ENCODE measurements at regions of chr6 and their contacts with region 1.

Region 1: GRCh38 chr6:110179401-110180227 is at the start of gene WASF1:
- DNase-seq: peak; percentile 95
- ATAC-seq: peak; percentile 78
- H3K4me3 ChIP-seq: peak within 1 kb of the TSS; percentile 66 to 100 (median 90)
- H3K4me3 Mint-ChIP-seq: no peak within 1 kb of the TSS
- H3K27ac ChIP-seq: peak within 1 kb of the TSS; percentile 72 to 88
- H3K27ac Mint-ChIP-seq: peak within 1 kb of the TSS; percentile 94
- H3K4me1 ChIP-seq: peaks cover 27 to 36% of the 10 kb centered on the region in 2 donors
- H3K4me1 Mint-ChIP-seq: peaks cover 8% of the 10 kb centered on the region
- H3K27me3 ChIP-seq: no peaks in the 10 kb centered on the region
- H3K27me3 Mint-ChIP-seq: no peaks in the 10 kb centered on the region
- CTCF ChIP-seq: no peak
- total RNA-seq, gene WASF1: 8.4 and 10.8 TPM in 2 replicates

Region 2: DNA sequence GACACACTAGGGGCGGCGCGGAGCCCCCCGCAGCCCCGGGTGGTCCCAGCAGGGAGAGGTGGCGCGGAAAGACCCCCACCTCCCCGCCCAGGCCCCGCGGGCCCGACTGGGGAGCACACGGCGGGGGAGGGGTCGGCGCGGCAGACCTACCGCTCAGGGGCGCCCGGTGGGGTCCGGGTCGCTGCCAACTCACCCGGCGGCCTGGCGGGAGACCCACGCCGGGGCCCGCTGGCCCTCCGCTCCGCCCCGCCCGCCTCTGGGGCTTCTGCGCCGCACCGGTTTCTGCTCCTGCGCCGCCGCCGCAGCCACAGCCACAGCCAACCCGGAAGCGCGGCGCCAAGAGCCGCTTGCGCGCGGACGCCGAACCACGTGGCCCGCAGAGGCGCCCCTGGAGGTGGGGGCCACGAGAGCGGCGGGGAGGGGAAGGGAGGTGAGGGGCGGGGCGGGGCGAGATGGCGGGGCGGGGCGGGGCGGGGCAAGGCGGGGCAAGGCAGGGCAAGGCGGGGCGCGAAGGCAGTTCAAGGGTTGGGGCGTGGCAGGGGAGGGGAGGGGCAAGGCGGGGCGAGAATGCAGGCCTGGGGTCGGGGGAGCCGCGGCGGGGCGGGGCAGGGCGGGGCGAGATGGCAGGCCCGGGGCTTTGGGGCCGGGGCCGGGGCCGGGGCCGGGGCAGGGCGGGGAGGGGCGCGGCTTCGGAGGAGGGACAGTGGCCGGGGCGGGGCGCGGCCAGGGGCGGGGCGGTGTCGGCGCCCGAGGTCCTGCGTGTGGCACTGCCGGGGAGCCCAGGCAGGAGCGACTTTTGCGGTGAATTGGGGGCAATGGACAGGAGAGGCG is 696.5 kb before region 1 on chr6 and contains the start of gene ZBTB24:
- CTCF ChIA-PET with region 1: no interaction called
- POLR2A ChIA-PET with region 1: no interaction called
- intact Hi-C with region 1: loop called (anchors 5 kb)
- DNase-seq: peak; percentile 93
- ATAC-seq: peak; percentile 83
- H3K4me3 ChIP-seq: peak within 1 kb of the TSS; percentile 76 to 97 (median 94)
- H3K4me3 Mint-ChIP-seq: peak within 1 kb of the TSS; percentile 96
- H3K27ac ChIP-seq: peak within 1 kb of the TSS; percentile 65 to 81
- H3K27ac Mint-ChIP-seq: peak within 1 kb of the TSS; percentile 89
- H3K4me1 ChIP-seq: peaks cover 40 to 57% of the 10 kb centered on the region in 2 donors
- H3K4me1 Mint-ChIP-seq: peaks cover 50% of the 10 kb centered on the region
- H3K27me3 ChIP-seq: no peaks in the 10 kb centered on the region
- H3K27me3 Mint-ChIP-seq: no peaks in the 10 kb centered on the region
- CTCF ChIP-seq: no peak
- total RNA-seq, gene ZBTB24: 31.4 and 32.9 TPM in 2 replicates

Region 3: GRCh38 chr6:110029144-110029543 is 150.5 kb before region 1 on chr6:
- CTCF ChIA-PET with region 1: no interaction called
- POLR2A ChIA-PET with region 1: no interaction called
- intact Hi-C with region 1: no loop called
- DNase-seq: no peak
- ATAC-seq: no peak
- H3K4me3 ChIP-seq: no peak overlapping the region
- H3K4me3 Mint-ChIP-seq: no peak overlapping the region
- H3K27ac ChIP-seq: no peak overlapping the region
- H3K27ac Mint-ChIP-seq: no peak overlapping the region
- H3K4me1 ChIP-seq: no peaks in the 10 kb centered on the region
- H3K4me1 Mint-ChIP-seq: no peaks in the 10 kb centered on the region
- H3K27me3 ChIP-seq: no peaks in the 10 kb centered on the region
- H3K27me3 Mint-ChIP-seq: no peaks in the 10 kb centered on the region
- CTCF ChIP-seq: no peak

Region 4: DNA sequence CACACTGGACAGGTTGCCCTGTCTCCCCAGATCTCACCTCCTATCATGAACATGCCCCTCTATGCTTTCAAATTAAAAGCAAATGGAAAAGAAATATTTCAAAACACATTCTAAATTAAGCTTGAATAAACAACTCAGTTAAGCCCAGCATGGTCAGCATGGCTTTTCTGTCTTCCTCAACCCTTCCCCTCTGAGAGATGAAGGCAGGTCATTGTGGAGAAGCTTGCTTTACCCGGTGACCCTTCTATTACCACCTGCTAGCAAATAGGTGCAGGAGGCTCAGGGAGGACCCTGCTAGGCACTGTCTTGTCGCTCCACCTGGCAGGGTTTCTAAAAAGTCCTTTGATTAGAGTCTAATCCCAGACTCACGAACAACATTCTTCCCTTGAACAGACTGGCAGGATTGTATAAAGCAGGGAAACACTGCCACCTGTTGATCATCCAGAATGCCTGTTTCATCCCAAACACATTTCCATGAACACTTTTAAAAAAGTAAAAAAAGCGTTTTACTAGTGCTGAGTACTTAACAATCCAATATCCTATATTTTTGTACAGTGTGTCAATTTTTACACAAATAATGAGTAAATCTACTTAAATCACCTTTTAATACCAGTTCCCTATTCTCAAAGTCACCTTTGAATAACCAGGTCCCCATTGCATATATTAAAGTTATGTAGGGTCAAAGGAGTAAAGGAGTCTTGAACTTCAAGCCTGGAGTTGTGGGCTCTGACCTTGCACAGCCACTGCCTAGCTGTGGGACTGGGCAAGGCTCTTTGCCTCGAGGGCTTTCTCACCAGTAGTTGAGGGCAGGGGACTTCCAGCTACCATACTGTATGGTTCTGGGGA is 126.0 kb before region 1 on chr6:
- CTCF ChIA-PET with region 1: no interaction called
- POLR2A ChIA-PET with region 1: no interaction called
- intact Hi-C with region 1: loop called (anchors 10 kb)
- DNase-seq: peak; percentile 53
- ATAC-seq: no peak
- H3K4me3 ChIP-seq: no peak overlapping the region
- H3K4me3 Mint-ChIP-seq: no peak overlapping the region
- H3K27ac ChIP-seq: no peak overlapping the region
- H3K27ac Mint-ChIP-seq: no peak overlapping the region
- H3K4me1 ChIP-seq: peaks cover 0 to 3% of the 10 kb centered on the region in 2 donors
- H3K4me1 Mint-ChIP-seq: no peaks in the 10 kb centered on the region
- H3K27me3 ChIP-seq: no peaks in the 10 kb centered on the region
- H3K27me3 Mint-ChIP-seq: peaks cover 7% of the 10 kb centered on the region
- CTCF ChIP-seq: peak; percentile 57

Region 5: DNA sequence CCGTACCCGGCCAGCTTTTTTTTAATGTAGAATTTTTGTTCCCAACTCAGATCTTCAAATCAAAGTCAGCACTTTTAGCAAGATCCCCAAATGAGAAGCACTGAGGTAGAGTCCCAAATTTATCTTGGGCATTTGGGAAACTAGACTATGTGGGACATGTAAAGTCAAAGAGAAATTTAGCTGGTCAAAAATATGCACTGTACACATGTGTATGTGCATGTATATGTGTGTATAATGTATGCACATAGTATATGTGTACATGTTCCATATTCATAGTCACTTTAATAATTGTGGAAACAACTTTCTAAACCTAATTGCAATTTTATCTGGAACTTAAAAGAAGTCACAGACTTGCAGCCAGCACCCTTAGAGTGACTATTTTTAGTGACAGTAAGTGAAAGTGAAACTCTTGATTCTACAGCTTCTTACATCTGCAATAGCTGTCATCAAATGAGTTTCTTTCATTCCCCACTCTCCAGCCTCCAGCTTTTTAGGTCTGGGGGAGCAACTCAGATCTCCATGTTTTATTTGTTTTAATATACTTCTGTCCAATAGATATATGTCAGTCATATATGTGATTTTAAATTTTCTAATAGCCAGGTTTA is 54.3 kb after region 1 on chr6:
- CTCF ChIA-PET with region 1: no interaction called
- POLR2A ChIA-PET with region 1: no interaction called
- intact Hi-C with region 1: loop called (anchors 1 kb)
- DNase-seq: peak; percentile 46
- ATAC-seq: peak; percentile 41
- H3K4me3 ChIP-seq: no peak overlapping the region
- H3K4me3 Mint-ChIP-seq: no peak overlapping the region
- H3K27ac ChIP-seq: peak overlapping the region; percentile 1 to 38
- H3K27ac Mint-ChIP-seq: peak overlapping the region; percentile 63
- H3K4me1 ChIP-seq: peaks cover 6 to 7% of the 10 kb centered on the region in 2 donors
- H3K4me1 Mint-ChIP-seq: peaks cover 12% of the 10 kb centered on the region
- H3K27me3 ChIP-seq: no peaks in the 10 kb centered on the region
- H3K27me3 Mint-ChIP-seq: no peaks in the 10 kb centered on the region
- CTCF ChIP-seq: no peak

Region 6: GRCh38 chr6:110456694-110457093 is 277.1 kb after region 1 on chr6:
- CTCF ChIA-PET with region 1: no interaction called
- POLR2A ChIA-PET with region 1: no interaction called
- intact Hi-C with region 1: no loop called
- DNase-seq: no peak
- ATAC-seq: no peak
- H3K4me3 ChIP-seq: no peak overlapping the region
- H3K4me3 Mint-ChIP-seq: no peak overlapping the region
- H3K27ac ChIP-seq: no peak overlapping the region
- H3K27ac Mint-ChIP-seq: no peak overlapping the region
- H3K4me1 ChIP-seq: no peaks in the 10 kb centered on the region
- H3K4me1 Mint-ChIP-seq: no peaks in the 10 kb centered on the region
- H3K27me3 ChIP-seq: no peaks in the 10 kb centered on the region
- H3K27me3 Mint-ChIP-seq: peaks cover 19% of the 10 kb centered on the region
- CTCF ChIP-seq: no peak

Region 7: GRCh38 chr6:110595112-110595511 is 415.5 kb after region 1 on chr6:
- CTCF ChIA-PET with region 1: no interaction called
- POLR2A ChIA-PET with region 1: no interaction called
- intact Hi-C with region 1: no loop called
- DNase-seq: no peak
- ATAC-seq: no peak
- H3K4me3 ChIP-seq: no peak overlapping the region
- H3K4me3 Mint-ChIP-seq: no peak overlapping the region
- H3K27ac ChIP-seq: no peak overlapping the region
- H3K27ac Mint-ChIP-seq: no peak overlapping the region
- H3K4me1 ChIP-seq: peaks cover 5 to 7% of the 10 kb centered on the region in 2 donors
- H3K4me1 Mint-ChIP-seq: peaks cover 8% of the 10 kb centered on the region
- H3K27me3 ChIP-seq: no peaks in the 10 kb centered on the region
- H3K27me3 Mint-ChIP-seq: no peaks in the 10 kb centered on the region
- CTCF ChIP-seq: no peak

Region 8: GRCh38 chr6:110873981-110874879 is 694.6 kb after region 1 on chr6 and contains the start of gene AMD1:
- CTCF ChIA-PET with region 1: no interaction called
- POLR2A ChIA-PET with region 1: no interaction called
- intact Hi-C with region 1: loop called (anchors 2 kb)
- DNase-seq: peak; percentile 98
- ATAC-seq: peak; percentile 77
- H3K4me3 ChIP-seq: peak within 1 kb of the TSS; percentile 78 to 96 (median 93)
- H3K4me3 Mint-ChIP-seq: peak within 1 kb of the TSS; percentile 100
- H3K27ac ChIP-seq: peak within 1 kb of the TSS; percentile 80 to 88
- H3K27ac Mint-ChIP-seq: peak within 1 kb of the TSS; percentile 100
- H3K4me1 ChIP-seq: peaks cover 30 to 34% of the 10 kb centered on the region in 2 donors
- H3K4me1 Mint-ChIP-seq: peaks cover 40% of the 10 kb centered on the region
- H3K27me3 ChIP-seq: no peaks in the 10 kb centered on the region
- H3K27me3 Mint-ChIP-seq: no peaks in the 10 kb centered on the region
- CTCF ChIP-seq: no peak
- total RNA-seq, gene AMD1: 49.3 and 49.8 TPM in 2 replicates

Measured in B cell (primary cell).